ENCODE measurements at regions of chr9 and their contacts with region 1.

Region 1: DNA sequence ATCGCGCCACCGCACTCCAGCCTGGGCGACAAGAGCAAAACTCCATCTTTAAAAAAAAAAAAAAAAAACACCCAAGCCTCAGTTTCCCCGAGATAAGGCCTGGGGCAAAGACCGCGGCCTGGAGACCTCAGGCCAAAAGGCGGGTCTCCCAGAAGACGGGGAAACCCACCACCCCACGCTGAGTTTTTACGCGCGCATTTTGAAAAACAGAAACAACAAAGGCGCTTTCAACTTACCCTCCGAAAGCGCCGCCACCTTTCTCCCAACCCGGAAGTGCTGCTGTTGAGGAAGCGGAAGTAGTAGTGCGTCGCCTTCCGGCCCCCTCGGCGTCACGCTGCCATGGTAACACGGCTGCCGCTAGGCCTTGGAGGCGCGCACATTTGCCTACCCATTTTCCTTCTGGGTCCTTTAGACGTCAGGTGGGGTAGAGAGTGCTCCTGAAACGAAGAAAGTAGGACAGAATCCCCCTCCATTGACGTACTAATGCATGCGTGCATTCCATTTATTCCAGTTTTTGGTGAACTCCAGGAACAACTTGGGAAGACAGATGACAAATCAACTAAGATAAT is at the start of gene TTF1:
- DNase-seq: peak; percentile 71 to 81
- ATAC-seq: peak; percentile 87 to 88
- H3K4me3 ChIP-seq: peak within 1 kb of the TSS; percentile 72 to 90 (median 84)
- H3K27ac ChIP-seq: peak within 1 kb of the TSS; percentile 11 to 73 (median 54)
- H3K4me1 ChIP-seq: peaks cover 29 to 34% of the 10 kb centered on the region in 2 donors
- H3K27me3 ChIP-seq: peaks cover 22 to 24% (median 23%) of the 10 kb centered on the region in 3 donors
- CTCF ChIP-seq: no peak
- POLR2A ChIP-seq: no peak
- total RNA-seq, gene TTF1: 11.9 to 18.2 (median 12.8) TPM

Region 2: GRCh38 chr9:131755541-131756198 is 651.0 kb before region 1 on chr9:
- in situ Hi-C with region 1: loop called in 1 of 4 experiments (anchors 25 kb)
- intact Hi-C with region 1: no loop called
- DNase-seq: peak; percentile 53 to 78
- ATAC-seq: peak; percentile 82 to 95
- H3K4me3 ChIP-seq: no peak overlapping the region
- H3K27ac ChIP-seq: no peak overlapping the region
- H3K4me1 ChIP-seq: no peaks in the 10 kb centered on the region
- H3K27me3 ChIP-seq: peaks cover 0 to 8% (median 8%) of the 10 kb centered on the region in 3 donors
- CTCF ChIP-seq: peak; percentile 17 to 77 (median 50)
- POLR2A ChIP-seq: no peak

Region 3: DNA sequence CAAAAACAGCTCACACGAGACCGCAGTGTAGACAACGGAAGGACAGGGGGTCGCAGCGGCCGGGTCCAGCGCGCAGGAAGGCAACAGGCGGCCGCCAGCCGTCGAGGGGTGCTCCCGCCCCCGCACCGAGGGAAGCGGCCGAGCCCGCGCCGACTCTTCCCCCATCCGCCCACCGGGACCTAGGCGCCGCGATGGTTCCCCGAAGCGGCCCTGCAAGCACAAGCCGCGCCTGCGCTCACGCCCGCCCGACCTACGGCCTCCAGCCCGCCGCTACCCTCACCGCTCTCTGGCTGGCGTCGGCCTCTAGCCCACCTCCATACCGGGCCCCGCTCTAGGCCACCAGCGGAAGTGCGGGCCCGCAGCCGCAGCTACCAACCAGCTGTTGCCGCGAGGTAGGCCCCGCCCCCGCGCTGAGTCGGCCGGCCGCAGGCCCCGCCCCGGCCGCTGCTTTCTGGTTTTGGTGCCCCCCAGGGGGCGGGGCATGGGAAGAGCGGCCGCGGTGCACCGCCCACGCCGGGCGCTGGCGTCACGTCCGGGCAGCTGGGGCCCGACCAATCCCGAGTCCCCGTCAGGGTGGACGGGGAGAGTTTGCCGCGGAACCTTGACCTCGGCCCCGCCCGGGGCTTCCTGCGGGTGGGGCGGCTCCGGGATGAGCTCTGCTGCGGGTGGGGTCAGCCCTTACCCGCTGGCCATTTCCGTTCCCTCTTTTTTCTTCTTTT is 51.8 kb before region 1 on chr9 and contains the start of gene SETX:
- in situ Hi-C with region 1: no loop called
- intact Hi-C with region 1: loop called (anchors 1 kb)
- DNase-seq: peak; percentile 91 to 96
- ATAC-seq: peak; percentile 91 to 94
- H3K4me3 ChIP-seq: peak within 1 kb of the TSS; percentile 87 to 98 (median 95)
- H3K27ac ChIP-seq: peak within 1 kb of the TSS; percentile 83 to 97 (median 93)
- H3K4me1 ChIP-seq: peaks cover 28 to 32% of the 10 kb centered on the region in 2 donors
- H3K27me3 ChIP-seq: no peaks in the 10 kb centered on the region
- CTCF ChIP-seq: no peak
- POLR2A ChIP-seq: peak; percentile 97
- total RNA-seq, gene SETX: 22.3 to 39.3 (median 24.8) TPM

Region 4: GRCh38 chr9:132507746-132508469 is 101.3 kb after region 1 on chr9:
- in situ Hi-C with region 1: loop called in 1 of 4 experiments (anchors 25 kb)
- intact Hi-C with region 1: no loop called
- DNase-seq: peak; percentile 14 to 25
- ATAC-seq: peak in 1 of 2 donors; percentile 60
- H3K4me3 ChIP-seq: no peak overlapping the region
- H3K27ac ChIP-seq: no peak overlapping the region
- H3K4me1 ChIP-seq: no peaks in the 10 kb centered on the region
- H3K27me3 ChIP-seq: peaks cover 17 to 33% (median 19%) of the 10 kb centered on the region in 3 donors
- CTCF ChIP-seq: peak; percentile 35 to 79 (median 70)
- POLR2A ChIP-seq: no peak

Region 5: GRCh38 chr9:132800038-132800648 is 393.5 kb after region 1 on chr9:
- in situ Hi-C with region 1: loop called in 1 of 4 experiments (anchors 25 kb)
- intact Hi-C with region 1: no loop called
- DNase-seq: peak; percentile 36 to 45
- ATAC-seq: peak; percentile 56 to 68
- H3K4me3 ChIP-seq: no peak overlapping the region
- H3K27ac ChIP-seq: no peak overlapping the region
- H3K4me1 ChIP-seq: peaks cover 3% of the 10 kb centered on the region in 2 donors
- H3K27me3 ChIP-seq: peaks cover 10 to 23% (median 16%) of the 10 kb centered on the region in 3 donors
- CTCF ChIP-seq: peak; percentile 42 to 84 (median 79)
- POLR2A ChIP-seq: no peak